ENCODE measurements at regions of chr11 and their contacts with region 1.

Region 1: GRCh38 chr11:95067039-95067840 is 521 bp downstream of the SRSF8 start:
- DNase-seq: peak; percentile 50 to 83 (median 73)
- ATAC-seq: peak; percentile 74 to 75
- H3K4me3 Mint-ChIP-seq: peak overlapping the region; percentile 94 to 100 (median 98)
- H3K27ac Mint-ChIP-seq: peak overlapping the region; percentile 97 to 100 (median 99)
- H3K4me1 Mint-ChIP-seq: peaks cover 10 to 34% (median 29%) of the 10 kb centered on the region in 4 donors
- H3K27me3 Mint-ChIP-seq: no peaks in the 10 kb centered on the region

Region 2: DNA sequence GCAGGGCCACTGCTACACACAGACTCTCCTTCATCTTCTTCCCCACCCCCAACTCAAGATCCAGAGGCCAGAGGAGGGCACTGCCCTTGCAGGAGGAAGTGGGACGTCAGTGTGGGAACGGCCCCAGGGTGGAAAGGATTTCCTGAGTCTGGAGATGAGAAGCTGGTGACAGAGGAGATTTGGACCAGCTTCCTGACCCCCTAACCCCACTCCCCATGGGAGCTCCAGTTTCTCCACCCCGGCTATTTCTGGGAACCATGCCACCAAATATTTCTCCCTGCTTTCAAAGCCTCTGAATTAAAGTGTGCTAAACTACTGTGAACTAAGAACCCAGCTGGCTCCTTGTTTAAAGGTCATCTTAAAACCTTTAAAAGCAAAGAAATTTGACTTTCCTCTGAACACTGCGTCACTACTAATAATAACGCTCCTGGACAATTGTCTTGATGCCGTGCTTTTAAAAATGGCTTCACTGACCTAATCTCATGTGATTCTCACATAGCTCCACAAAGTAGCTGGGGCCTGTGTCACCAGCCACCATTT is 140.5 kb before region 1 on chr11:
- POLR2A ChIA-PET with region 1: interaction called, 18 read pairs
- DNase-seq: no peak
- ATAC-seq: no peak
- H3K4me3 Mint-ChIP-seq: peak overlapping the region in 3 of 10 donors; percentile 12 to 29 (median 22)
- H3K27ac Mint-ChIP-seq: peak overlapping the region in 2 of 10 donors; percentile 25 to 53
- H3K4me1 Mint-ChIP-seq: peaks cover 37 to 56% (median 51%) of the 10 kb centered on the region in 4 donors
- H3K27me3 Mint-ChIP-seq: peaks cover 0 to 4% (median 0%) of the 10 kb centered on the region in 5 donors

Region 3: DNA sequence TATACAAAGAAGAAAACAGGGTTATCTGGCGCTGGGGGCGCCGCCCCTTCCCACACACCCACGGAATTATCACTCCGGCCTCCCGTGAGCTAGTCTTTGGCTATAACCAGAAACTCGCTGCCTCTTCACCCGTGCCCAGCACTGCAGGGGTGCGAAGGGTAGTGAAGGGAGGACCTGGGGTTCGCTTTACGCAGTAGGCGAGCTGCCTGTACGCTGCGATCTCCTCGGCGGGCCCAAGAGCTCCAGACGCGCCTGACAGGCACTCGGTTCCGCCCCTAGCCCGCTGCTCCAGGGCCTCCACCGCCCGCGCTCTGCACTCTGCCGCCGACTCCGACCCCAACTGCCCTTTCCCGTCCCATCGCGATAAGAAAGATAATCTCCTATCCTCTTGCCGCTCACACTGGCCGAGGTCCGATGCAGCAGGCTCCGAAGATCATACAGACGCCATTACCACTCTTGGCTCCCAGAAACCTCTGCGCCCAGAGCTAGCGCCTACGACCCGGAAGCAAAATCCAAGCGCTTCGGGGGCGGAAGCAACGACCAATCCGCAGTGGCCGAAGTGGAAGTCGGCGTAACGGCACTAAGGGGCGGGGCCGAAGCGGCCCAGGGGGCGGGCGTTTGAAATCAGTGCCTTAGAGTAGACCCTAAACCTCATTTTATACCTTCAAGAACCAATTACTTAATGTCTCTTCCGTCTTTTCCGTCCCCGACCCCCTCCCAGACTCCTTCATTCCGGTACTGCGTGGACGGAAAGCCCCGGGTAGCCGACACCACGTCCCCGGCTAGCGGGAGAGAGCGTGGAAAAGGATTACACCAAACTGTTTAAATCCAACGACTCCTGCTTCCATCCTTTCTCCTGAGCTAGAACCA is 93.9 kb before region 1 on chr11 and contains the starts of genes CWC15 and KDM4D:
- POLR2A ChIA-PET with region 1: interaction called, 45 read pairs
- DNase-seq: peak; percentile 89 to 98 (median 94)
- ATAC-seq: peak; percentile 97 to 98
- H3K4me3 Mint-ChIP-seq: peak within 1 kb of the TSS; percentile 94 to 100 (median 99)
- H3K27ac Mint-ChIP-seq: peak within 1 kb of the TSS; percentile 95 to 99 (median 99)
- H3K4me1 Mint-ChIP-seq: peaks cover 10 to 37% (median 26%) of the 10 kb centered on the region in 4 donors
- H3K27me3 Mint-ChIP-seq: peaks cover 0 to 1% (median 0%) of the 10 kb centered on the region in 5 donors
- polyA plus RNA-seq, gene CWC15: 47.6 to 61.3 (median 51.5) TPM
- polyA plus RNA-seq, gene KDM4D: 0.13 to 0.24 (median 0.17) TPM

Region 4: DNA sequence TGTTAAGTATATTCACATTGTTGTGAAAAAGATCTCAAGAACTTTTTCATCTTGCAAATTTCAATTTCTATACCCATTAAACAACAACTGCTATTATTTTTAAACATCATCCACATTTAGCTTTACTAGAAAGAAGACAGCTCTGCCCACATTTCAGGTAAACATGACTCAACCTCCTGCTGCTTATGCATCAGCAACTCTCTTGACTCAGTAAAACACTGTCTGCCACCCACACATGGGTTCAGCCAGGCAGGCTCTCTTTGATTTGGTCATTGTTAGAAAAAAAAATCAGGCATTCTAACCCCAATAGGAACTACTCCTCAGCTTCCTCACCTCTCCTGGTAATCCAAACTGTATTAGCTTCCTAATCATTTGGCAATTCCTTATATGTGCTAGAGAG is 17.3 kb after region 1 on chr11:
- POLR2A ChIA-PET with region 1: interaction called, 180 read pairs
- DNase-seq: no peak
- ATAC-seq: no peak
- H3K4me3 Mint-ChIP-seq: no peak overlapping the region
- H3K27ac Mint-ChIP-seq: no peak overlapping the region
- H3K4me1 Mint-ChIP-seq: peaks cover 10 to 16% (median 14%) of the 10 kb centered on the region in 4 donors
- H3K27me3 Mint-ChIP-seq: peaks cover 0 to 14% (median 2%) of the 10 kb centered on the region in 5 donors

Region 5: DNA sequence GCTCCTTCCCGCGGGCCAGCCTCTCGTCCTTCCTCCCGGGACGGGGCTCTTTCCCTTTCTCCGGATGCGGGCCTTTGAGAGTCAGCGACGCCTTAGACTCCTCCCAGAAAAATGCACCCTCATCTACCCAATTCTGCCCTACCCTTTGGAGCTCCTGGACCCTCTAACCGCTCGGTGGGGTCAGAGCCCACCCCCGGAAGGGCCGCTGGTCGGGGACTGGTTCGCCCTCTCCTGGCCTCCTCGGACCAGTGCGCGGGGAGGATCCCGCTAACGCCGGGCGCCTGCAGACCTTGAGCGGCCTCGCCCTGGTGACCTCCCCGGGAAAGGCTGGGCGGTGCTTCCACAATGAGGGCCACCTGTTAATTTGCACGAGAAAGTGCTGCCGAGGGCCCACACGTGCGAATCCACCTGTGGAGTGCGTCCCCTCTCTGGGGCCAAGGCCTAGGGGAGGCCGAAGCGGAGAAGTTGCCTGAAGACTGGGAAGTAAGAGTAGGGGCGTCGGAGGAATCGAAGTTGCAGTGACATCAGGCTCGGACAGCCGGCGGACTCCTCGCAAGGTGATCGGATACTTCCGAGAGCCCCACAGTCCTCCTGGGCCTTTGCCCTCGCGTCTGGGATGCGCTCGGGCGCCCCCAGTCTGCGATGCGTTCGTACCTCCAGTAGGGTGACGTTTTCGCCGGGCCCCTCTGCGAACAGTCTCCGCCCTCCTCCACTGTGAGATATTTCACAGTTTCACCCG is 83.9 kb after region 1 on chr11:
- POLR2A ChIA-PET with region 1: interaction called, 66 read pairs
- DNase-seq: peak; percentile 81 to 95 (median 90)
- ATAC-seq: peak; percentile 91 to 96
- H3K4me3 Mint-ChIP-seq: peak overlapping the region; percentile 83 to 99 (median 90)
- H3K27ac Mint-ChIP-seq: peak overlapping the region; percentile 85 to 100 (median 96)
- H3K4me1 Mint-ChIP-seq: peaks cover 22 to 45% (median 32%) of the 10 kb centered on the region in 4 donors
- H3K27me3 Mint-ChIP-seq: peaks cover 3 to 11% (median 7%) of the 10 kb centered on the region in 5 donors

Region 6: DNA sequence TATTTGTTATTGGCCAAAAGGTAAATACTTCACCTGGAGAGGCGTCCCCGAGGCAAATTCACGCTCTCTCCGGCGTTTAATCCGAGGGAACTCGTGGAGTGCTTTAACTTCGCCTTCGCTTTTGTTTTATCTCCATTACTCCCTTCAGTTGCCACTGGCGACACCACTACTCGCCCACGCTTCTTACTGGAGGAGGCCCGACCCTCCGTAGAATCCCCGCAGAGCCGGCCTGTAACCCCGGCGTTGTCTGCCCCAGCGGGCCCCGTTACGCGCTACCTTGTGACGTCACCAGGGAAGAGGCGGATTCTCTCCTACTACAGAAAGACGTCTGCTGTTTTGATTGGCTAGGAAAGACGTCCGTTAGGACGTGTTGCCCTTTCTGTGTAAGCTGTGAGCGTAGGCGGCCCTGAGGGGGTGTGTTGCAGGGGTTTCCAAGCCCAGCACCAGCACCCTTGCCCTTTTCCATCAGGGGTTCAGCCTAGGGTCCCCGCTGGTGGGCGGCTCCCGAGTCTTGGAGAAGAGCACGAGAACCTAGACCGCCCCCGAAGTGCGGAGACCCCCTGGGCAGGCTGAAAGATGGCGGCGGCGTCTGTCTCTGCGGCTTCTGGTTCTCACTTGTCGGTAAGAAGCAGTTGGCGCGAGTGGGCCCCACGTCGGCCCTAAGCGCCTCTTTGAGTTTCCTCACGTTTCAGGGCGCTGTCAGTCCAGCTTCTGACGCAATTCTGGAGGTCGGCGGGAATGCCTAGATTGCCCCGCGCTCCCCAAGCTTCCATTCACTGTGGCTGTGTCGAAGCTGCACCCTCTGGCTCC is 723.1 kb after region 1 on chr11 and contains the start of gene CEP57:
- POLR2A ChIA-PET with region 1: interaction called, 76 read pairs
- DNase-seq: peak in 9 of 10 donors; percentile 74 to 98 (median 93)
- ATAC-seq: peak; percentile 60 to 61
- H3K4me3 Mint-ChIP-seq: peak within 1 kb of the TSS; percentile 99 to 100 (median 100)
- H3K27ac Mint-ChIP-seq: peak within 1 kb of the TSS; percentile 99 to 100 (median 100)
- H3K4me1 Mint-ChIP-seq: peaks cover 24 to 66% (median 61%) of the 10 kb centered on the region in 4 donors
- H3K27me3 Mint-ChIP-seq: peaks cover 0 to 4% (median 0%) of the 10 kb centered on the region in 5 donors
- polyA plus RNA-seq, gene CEP57: 53.0 to 64.2 (median 60.8) TPM

Measured in naive thymus-derived CD8-positive, alpha-beta T cell (primary cell).